Colonic mucosa (tissue), 4 donors: ENCODE measurements at regions of chr1 and their contacts with region 1.

Region 1: GRCh38 chr1:234490793-234491479 is 12.0 kb upstream of the TARBP1 start:
- DNase-seq: no peak
- H3K4me3 ChIP-seq: no peak overlapping the region
- H3K27ac ChIP-seq: no peak overlapping the region
- H3K4me1 ChIP-seq: no peaks in the 10 kb centered on the region
- H3K27me3 ChIP-seq: no peaks in the 10 kb centered on the region
- CTCF ChIP-seq: no peak

Region 2: GRCh38 chr1:234309598-234310459 is 181.1 kb before region 1 on chr1:
- intact Hi-C with region 1: no loop called
- DNase-seq: peak; percentile 72
- H3K4me3 ChIP-seq: no peak overlapping the region
- H3K27ac ChIP-seq: no peak overlapping the region
- H3K4me1 ChIP-seq: no peaks in the 10 kb centered on the region
- H3K27me3 ChIP-seq: no peaks in the 10 kb centered on the region
- CTCF ChIP-seq: peak; percentile 88

Region 3: DNA sequence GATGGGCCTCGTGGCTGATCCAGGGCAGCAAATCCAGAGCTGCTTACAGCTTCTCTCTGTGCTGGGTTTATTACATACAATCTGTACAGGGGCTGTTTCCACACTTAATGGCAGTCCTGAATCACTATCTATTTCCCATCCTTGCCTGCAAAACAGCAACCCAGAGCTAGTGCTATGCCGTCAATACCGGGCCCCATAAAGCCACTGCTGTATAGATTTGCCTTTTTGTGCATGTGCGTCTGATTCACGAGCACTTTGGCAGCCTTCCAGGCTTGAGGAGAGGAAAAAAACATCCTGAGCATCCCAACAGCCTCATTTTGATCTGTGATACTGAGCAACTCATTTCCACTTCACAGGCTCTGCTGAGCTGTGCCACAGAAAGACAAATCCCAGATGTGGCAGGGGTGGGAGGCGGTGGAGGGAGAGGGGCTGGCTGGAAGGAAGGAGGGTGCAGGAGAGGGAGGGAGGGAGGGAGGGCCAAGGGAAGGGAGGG is 53.2 kb after region 1 on chr1:
- intact Hi-C with region 1: no loop called
- DNase-seq: peak; percentile 79
- H3K4me3 ChIP-seq: no peak overlapping the region
- H3K27ac ChIP-seq: peak overlapping the region; percentile 35
- H3K4me1 ChIP-seq: peaks cover 8% of the 10 kb centered on the region
- H3K27me3 ChIP-seq: no peaks in the 10 kb centered on the region
- CTCF ChIP-seq: no peak

Region 4: GRCh38 chr1:234599617-234600417 is 108.9 kb after region 1 on chr1:
- intact Hi-C with region 1: no loop called
- DNase-seq: peak; percentile 88
- H3K4me3 ChIP-seq: peak overlapping the region; percentile 41
- H3K27ac ChIP-seq: peak overlapping the region; percentile 99
- H3K4me1 ChIP-seq: peaks cover 18% of the 10 kb centered on the region
- H3K27me3 ChIP-seq: no peaks in the 10 kb centered on the region
- CTCF ChIP-seq: no peak

Region 5: GRCh38 chr1:235093696-235094592 is 603.0 kb after region 1 on chr1:
- intact Hi-C with region 1: loop called (anchors 5 kb)
- DNase-seq: peak; percentile 89
- H3K4me3 ChIP-seq: no peak overlapping the region
- H3K27ac ChIP-seq: no peak overlapping the region
- H3K4me1 ChIP-seq: no peaks in the 10 kb centered on the region
- H3K27me3 ChIP-seq: no peaks in the 10 kb centered on the region
- CTCF ChIP-seq: peak; percentile 88